ENCODE measurements at regions of chr3 and their contacts with region 1.

Region 1: DNA sequence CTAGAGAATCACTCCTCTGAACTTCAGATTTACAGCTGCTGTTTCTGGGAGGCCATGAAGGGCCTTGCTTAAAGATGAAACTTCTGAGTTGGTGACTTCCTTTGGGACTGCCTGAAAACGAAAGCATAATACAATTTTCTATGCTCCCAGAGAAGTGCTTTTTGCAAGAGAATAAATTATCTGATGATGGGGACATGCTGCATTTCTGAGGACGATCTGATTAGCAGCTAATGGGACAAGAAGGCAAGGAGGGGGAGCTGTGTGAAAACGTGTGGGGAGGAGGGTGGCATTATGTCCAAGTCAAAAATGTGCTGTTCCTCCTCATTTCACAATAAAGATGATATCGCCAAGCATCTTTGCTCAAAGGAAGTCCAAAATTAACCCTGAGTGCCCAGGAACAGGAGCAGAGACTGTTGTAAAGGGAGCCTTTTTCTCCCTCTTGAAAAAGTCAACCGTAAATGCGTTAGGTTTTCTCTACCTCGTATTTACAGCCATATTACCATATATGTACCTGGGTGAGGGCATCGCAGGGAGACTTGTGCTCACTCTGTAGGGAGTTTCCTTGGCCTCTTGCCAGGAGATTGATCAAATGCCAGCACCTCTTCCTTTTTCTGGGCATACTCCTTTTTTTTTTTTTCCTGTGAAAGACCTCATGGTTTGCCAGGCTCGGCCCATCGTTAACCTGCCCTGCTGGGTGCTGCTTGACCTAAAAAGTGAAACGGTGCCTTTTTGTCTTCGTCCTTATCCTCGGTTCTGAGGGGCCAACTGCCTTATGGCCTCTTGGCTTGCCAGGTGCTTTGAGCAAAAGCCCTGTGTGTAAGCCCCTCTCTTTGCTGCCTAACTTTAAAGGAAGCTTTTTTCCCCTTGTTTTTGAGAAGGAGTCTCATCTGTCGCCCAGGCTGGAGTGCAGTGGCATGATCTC is 11.5 kb downstream of the ITPR1 start:
- DNase-seq: no peak
- ATAC-seq: no peak
- H3K4me3 ChIP-seq: no peak overlapping the region
- H3K27ac ChIP-seq: no peak overlapping the region
- H3K4me1 ChIP-seq: peaks cover 15 to 55% of the 10 kb centered on the region in 2 experiments
- H3K27me3 ChIP-seq: no peaks in the 10 kb centered on the region
- CTCF ChIP-seq: no peak
- EP300 ChIP-seq: no peak
- POLR2A ChIP-seq: no peak
- RAD21 ChIP-seq: 0 out of 4 replicates have a peak, but pooled peaks of 1 of the 2 experiments have one; percentile 11

Region 2: GRCh38 chr3:3648988-3649679 is 855.5 kb before region 1 on chr3:
- CTCF ChIA-PET with region 1: no interaction called
- POLR2A ChIA-PET with region 1: no interaction called
- in situ Hi-C with region 1: no loop called
- intact Hi-C with region 1: no loop called
- DNase-seq: no peak
- ATAC-seq: no peak
- H3K4me3 ChIP-seq: no peak overlapping the region
- H3K27ac ChIP-seq: no peak overlapping the region
- H3K4me1 ChIP-seq: no peaks in the 10 kb centered on the region
- H3K27me3 ChIP-seq: no peaks in the 10 kb centered on the region
- CTCF ChIP-seq: no peak
- EP300 ChIP-seq: no peak
- POLR2A ChIP-seq: no peak
- RAD21 ChIP-seq: no peak

Region 3: DNA sequence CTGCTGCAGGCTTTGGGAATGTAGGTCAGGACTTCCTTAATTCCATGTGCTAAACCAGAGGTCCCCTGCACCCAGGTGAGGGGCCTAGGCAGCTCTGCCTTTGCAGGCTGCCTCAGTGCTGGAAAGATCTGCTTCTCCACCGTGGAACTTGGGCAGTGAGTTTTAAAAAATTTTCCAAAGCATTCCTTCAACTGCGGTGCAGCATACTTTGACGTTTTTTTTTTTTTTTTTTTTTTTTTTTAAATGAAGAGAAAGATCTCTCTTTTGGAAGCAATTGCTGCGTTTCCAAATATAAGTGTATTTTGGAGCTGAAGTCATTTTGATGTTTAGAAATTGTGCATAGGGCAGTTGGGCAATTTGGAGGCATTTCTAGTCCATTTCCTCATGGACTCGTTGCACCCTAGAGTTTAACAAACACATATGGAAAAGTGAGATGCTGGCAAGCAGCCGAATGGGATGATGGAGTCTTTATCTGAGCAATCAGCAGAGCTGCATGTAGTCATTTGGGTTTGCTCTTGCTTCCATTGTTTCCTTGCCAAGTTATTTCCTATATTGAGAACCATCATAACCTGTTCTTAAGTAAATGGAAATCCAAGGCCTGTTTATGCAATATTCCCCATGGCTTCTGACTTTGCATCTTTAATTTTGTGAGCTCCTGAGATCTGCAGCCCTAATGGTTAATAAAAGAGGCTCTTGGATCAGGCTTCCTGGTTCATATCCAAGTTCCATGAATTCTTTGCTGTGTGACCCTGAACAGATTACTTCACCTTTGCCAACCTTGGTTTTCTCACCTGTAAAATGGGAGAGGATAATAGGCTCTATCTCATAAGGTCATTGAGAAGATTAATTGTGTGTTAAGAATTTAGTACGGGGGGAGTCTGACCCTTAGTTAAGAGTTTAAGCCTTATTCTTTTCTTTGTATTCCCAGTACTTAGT is 19.8 kb after region 1 on chr3:
- CTCF ChIA-PET with region 1: no interaction called
- POLR2A ChIA-PET with region 1: interaction called, 45 read pairs
- in situ Hi-C with region 1: no loop called
- intact Hi-C with region 1: no loop called
- DNase-seq: peak in 1 of 4 experiments; percentile 59
- ATAC-seq: peak; percentile 26; the same call in 1 of the 3 replicates
- H3K4me3 ChIP-seq: no peak overlapping the region
- H3K27ac ChIP-seq: no peak overlapping the region
- H3K4me1 ChIP-seq: peaks cover 7 to 30% of the 10 kb centered on the region in 2 experiments; a peak in 4 of 5 replicates
- H3K27me3 ChIP-seq: no peaks in the 10 kb centered on the region
- CTCF ChIP-seq: no peak
- EP300 ChIP-seq: no peak
- POLR2A ChIP-seq: no peak
- RAD21 ChIP-seq: no peak

Region 4: GRCh38 chr3:4565806-4566501 is 61.4 kb after region 1 on chr3:
- CTCF ChIA-PET with region 1: no interaction called
- POLR2A ChIA-PET with region 1: no interaction called
- in situ Hi-C with region 1: no loop called
- intact Hi-C with region 1: no loop called
- DNase-seq: no peak
- ATAC-seq: no peak
- H3K4me3 ChIP-seq: no peak overlapping the region
- H3K27ac ChIP-seq: no peak overlapping the region
- H3K4me1 ChIP-seq: peaks cover 0 to 4% of the 10 kb centered on the region in 2 experiments; a peak in 3 of 5 replicates
- H3K27me3 ChIP-seq: no peaks in the 10 kb centered on the region; a peak in 1 of 5 replicates
- CTCF ChIP-seq: no peak
- EP300 ChIP-seq: no peak
- POLR2A ChIP-seq: no peak
- RAD21 ChIP-seq: no peak